ENCODE measurements at regions of chr12 and their contacts with region 1.

Region 1: DNA sequence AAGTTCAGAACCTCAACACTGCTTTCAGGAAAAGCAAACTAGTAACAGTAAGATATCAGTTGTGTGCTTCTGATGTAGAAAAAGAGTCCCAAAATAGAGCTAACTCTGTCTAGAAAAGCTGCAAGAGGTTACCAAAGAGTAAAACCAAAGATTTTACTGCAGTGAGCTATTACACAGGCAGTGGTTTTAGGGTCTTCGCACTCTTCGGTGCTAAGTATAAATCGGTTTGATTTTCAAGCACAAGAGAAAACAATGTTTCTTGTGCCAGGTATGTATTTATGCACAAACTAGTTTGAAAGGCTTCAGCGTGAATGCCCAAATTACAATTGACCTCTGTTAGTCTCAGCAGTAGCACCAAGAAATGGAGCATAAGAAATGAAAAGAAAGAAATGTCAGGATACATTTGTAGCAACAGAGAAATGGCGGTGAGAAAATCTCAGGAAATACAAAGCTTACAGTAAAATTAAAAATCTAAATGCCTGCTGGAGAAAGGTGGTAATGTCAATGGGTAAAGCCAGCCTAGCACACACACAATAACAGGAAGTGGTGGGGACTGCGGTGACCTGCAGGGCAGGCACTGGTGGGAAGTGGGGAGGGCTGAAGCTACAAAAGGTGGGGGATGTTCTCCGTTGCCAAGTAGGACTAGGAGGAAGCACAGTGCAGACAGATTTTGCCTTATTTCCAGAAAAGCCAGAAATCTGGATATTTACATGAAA is 18.0 kb upstream of the DYRK2 start:
- DNase-seq: peak; percentile 72 to 97 (median 87)
- ATAC-seq: peak; percentile 98
- H3K4me3 ChIP-seq: peak overlapping the region; percentile 23 to 33
- H3K4me3 Mint-ChIP-seq: peak overlapping the region; percentile 75
- H3K27ac ChIP-seq: peak overlapping the region; percentile 67 to 70
- H3K27ac Mint-ChIP-seq: peak overlapping the region; percentile 95
- H3K4me1 ChIP-seq: peaks cover 93% of the 10 kb centered on the region
- H3K4me1 Mint-ChIP-seq: peaks cover 92% of the 10 kb centered on the region
- H3K27me3 ChIP-seq: no peaks in the 10 kb centered on the region
- H3K27me3 Mint-ChIP-seq: no peaks in the 10 kb centered on the region
- CTCF ChIP-seq: peak; percentile 64

Region 2: DNA sequence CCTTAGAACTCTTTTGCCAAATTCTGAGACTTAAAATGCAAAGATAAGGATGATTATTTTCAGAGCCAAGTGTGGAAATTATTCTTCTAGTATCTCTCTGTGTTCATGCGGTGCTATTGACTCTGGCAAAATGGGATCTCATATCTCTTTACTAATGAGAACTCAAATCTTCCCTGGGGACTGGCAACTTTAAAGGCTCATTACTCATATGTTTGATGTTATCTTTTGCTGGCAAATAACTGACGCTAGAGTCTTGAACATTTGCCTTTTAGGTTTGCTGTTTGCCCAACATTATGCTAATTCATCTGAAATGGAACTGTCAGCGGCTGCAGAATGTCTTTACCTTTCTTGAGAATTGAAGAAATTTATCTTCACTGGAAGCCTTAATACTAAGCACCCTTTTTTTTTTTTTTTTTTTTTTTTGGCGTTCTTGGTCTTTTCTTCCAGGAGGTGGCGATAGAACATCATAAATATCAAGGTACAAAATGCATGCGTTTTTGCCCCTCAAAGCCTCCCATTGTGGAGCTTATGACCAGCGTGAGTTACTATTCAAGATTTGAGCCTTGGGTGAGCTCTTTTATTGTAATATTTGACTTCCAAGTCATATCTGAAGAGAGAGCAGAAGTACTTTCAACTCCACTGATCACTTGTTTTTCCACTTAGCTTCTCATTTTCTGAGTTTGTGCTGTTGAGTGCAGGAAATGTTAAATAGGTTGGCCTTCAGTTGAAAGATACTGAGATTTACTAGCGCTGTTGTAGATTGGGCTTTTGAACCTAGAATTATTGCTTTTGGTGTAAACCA is 274.8 kb before region 1 on chr12:
- CTCF ChIA-PET with region 1: interaction called, 16 read pairs
- POLR2A ChIA-PET with region 1: interaction called, 4 read pairs
- intact Hi-C with region 1: no loop called
- DNase-seq: peak in 4 of 9 experiments; percentile 11 to 76 (median 44)
- ATAC-seq: peak; percentile 61
- H3K4me3 ChIP-seq: no peak overlapping the region
- H3K4me3 Mint-ChIP-seq: no peak overlapping the region
- H3K27ac ChIP-seq: no peak overlapping the region
- H3K27ac Mint-ChIP-seq: no peak overlapping the region
- H3K4me1 ChIP-seq: peaks cover 5% of the 10 kb centered on the region
- H3K4me1 Mint-ChIP-seq: peaks cover 7% of the 10 kb centered on the region
- H3K27me3 ChIP-seq: no peaks in the 10 kb centered on the region
- H3K27me3 Mint-ChIP-seq: no peaks in the 10 kb centered on the region
- CTCF ChIP-seq: peak; percentile 76

Region 3: GRCh38 chr12:67482751-67483671 is 147.5 kb before region 1 on chr12:
- CTCF ChIA-PET with region 1: interaction called, 9 read pairs
- POLR2A ChIA-PET with region 1: interaction called, 14 read pairs
- intact Hi-C with region 1: loop called in 1 of 2 experiments (anchors 5 kb)
- DNase-seq: peak; percentile 46 to 91 (median 85)
- ATAC-seq: peak; percentile 91
- H3K4me3 ChIP-seq: no peak overlapping the region
- H3K4me3 Mint-ChIP-seq: peak overlapping the region; percentile 12
- H3K27ac ChIP-seq: peak overlapping the region; percentile 23 to 58
- H3K27ac Mint-ChIP-seq: peak overlapping the region; percentile 80
- H3K4me1 ChIP-seq: peaks cover 40% of the 10 kb centered on the region
- H3K4me1 Mint-ChIP-seq: peaks cover 45% of the 10 kb centered on the region
- H3K27me3 ChIP-seq: no peaks in the 10 kb centered on the region
- H3K27me3 Mint-ChIP-seq: no peaks in the 10 kb centered on the region
- CTCF ChIP-seq: no peak

Region 4: DNA sequence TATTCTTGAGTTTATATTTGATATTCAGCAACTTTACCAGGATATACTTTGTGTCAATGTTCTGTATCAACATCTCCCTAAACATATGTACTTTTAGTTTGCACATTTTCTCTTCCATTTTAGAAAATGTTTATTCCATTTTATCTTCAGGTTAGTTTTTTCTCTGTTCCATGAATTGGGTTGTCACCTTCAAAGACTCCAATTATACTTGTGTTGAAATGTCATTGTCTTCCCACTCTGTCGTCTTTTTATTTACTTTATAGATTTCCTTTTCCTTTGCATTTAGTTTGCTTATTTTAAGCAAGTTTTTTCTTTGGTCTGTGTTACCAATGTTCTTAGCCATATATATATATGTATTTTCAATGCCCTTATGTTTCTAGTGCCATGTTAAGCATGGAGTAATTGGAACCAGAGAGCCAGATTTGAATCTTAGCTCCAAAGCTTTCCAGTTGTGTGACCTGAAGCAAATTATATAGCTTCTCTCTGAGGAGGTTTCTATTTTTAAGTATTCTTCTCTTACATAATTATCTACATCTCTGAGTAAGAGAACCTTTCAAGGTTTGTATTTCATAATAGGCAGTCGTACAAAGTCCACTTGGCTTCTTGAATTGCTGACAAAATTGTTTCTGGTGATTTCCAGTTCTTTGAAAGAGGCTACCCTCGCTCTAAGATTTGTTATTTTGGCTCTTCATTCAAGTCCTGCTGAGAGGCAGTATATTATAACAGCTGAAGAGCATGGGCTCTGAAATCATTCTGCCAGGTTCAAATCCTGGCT is 67.8 kb before region 1 on chr12:
- CTCF ChIA-PET with region 1: no interaction called
- POLR2A ChIA-PET with region 1: interaction called, 3 read pairs
- intact Hi-C with region 1: loop called in 1 of 2 experiments (anchors 5 kb)
- DNase-seq: no peak
- ATAC-seq: no peak
- H3K4me3 ChIP-seq: no peak overlapping the region
- H3K4me3 Mint-ChIP-seq: no peak overlapping the region
- H3K27ac ChIP-seq: no peak overlapping the region
- H3K27ac Mint-ChIP-seq: no peak overlapping the region
- H3K4me1 ChIP-seq: no peaks in the 10 kb centered on the region
- H3K4me1 Mint-ChIP-seq: peaks cover 7% of the 10 kb centered on the region
- H3K27me3 ChIP-seq: no peaks in the 10 kb centered on the region
- H3K27me3 Mint-ChIP-seq: no peaks in the 10 kb centered on the region
- CTCF ChIP-seq: no peak

Region 5: DNA sequence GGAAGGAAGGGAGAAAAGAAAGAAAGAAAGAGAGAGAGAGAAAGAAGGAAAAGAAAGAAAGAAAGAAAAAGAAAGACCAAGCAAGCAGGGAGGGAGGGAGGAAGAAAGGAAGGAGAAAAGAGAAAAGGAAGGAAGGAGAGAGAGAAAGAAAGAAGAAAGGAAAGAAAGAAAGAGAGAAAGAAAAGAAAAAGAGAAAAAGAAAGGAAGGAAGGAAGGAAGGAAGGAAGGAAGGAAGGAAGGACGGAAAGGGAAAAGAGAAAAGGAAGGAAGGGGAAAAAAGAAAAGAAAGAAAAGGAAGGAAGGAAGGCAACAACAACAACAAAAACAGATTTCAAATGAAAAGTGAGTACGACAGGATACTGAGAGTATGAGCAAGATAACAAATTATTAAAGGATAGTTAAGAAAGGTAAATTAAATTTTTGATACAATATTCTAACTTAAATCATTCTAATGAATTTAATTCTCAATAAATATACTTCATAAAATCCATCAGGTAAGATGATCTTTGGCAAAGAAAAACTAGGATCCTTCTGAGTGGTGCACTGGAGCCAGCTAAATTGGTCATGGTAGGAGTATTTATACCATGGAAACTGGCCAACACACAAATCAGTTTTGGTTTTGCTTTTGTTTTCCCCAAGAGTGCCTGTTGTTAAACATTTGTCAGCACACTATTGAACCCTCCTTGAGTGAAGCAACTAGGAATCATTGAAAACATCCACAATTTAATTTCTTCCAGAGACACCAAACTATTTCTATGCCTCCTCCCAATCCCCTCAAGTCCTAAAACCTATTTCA is 38.1 kb before region 1 on chr12:
- CTCF ChIA-PET with region 1: interaction called, 13 read pairs
- POLR2A ChIA-PET with region 1: interaction called, 12 read pairs
- intact Hi-C with region 1: loop called (anchors 1 to 5 kb)
- DNase-seq: peak in 2 of 9 experiments; percentile 43 to 65
- ATAC-seq: no peak
- H3K4me3 ChIP-seq: no peak overlapping the region
- H3K4me3 Mint-ChIP-seq: peak overlapping the region; percentile 50
- H3K27ac ChIP-seq: peak overlapping the region in 1 of 2 experiments; percentile 49
- H3K27ac Mint-ChIP-seq: peak overlapping the region; percentile 81
- H3K4me1 ChIP-seq: peaks cover 47% of the 10 kb centered on the region
- H3K4me1 Mint-ChIP-seq: peaks cover 60% of the 10 kb centered on the region
- H3K27me3 ChIP-seq: no peaks in the 10 kb centered on the region
- H3K27me3 Mint-ChIP-seq: no peaks in the 10 kb centered on the region
- CTCF ChIP-seq: peak; percentile 16

Region 6: GRCh38 chr12:67640863-67641262 is 10.3 kb after region 1 on chr12:
- CTCF ChIA-PET with region 1: interaction called, 9 read pairs
- POLR2A ChIA-PET with region 1: interaction called, 143 read pairs
- intact Hi-C with region 1: no loop called
- DNase-seq: no peak
- ATAC-seq: no peak
- H3K4me3 ChIP-seq: no peak overlapping the region
- H3K4me3 Mint-ChIP-seq: no peak overlapping the region
- H3K27ac ChIP-seq: no peak overlapping the region
- H3K27ac Mint-ChIP-seq: no peak overlapping the region
- H3K4me1 ChIP-seq: no peaks in the 10 kb centered on the region
- H3K4me1 Mint-ChIP-seq: peaks cover 20% of the 10 kb centered on the region
- H3K27me3 ChIP-seq: no peaks in the 10 kb centered on the region
- H3K27me3 Mint-ChIP-seq: no peaks in the 10 kb centered on the region
- CTCF ChIP-seq: no peak

Measured in CD8-positive, alpha-beta T cell (primary cell).